Activated CD4-positive, alpha-beta memory T cell treated with anti-CD3 and anti-CD28 coated beads for 36 hours (primary cell): ENCODE measurements at regions of chr13 and their contacts with region 1.

Region 1: GRCh38 chr13:75694722-75695121 is 58.6 kb downstream of the LMO7 start:
- DNase-seq: no peak
- H3K4me3 Mint-ChIP-seq: no peak overlapping the region
- H3K27ac Mint-ChIP-seq: no peak overlapping the region
- H3K4me1 Mint-ChIP-seq: no peaks in the 10 kb centered on the region
- H3K27me3 Mint-ChIP-seq: no peaks in the 10 kb centered on the region

Region 2: DNA sequence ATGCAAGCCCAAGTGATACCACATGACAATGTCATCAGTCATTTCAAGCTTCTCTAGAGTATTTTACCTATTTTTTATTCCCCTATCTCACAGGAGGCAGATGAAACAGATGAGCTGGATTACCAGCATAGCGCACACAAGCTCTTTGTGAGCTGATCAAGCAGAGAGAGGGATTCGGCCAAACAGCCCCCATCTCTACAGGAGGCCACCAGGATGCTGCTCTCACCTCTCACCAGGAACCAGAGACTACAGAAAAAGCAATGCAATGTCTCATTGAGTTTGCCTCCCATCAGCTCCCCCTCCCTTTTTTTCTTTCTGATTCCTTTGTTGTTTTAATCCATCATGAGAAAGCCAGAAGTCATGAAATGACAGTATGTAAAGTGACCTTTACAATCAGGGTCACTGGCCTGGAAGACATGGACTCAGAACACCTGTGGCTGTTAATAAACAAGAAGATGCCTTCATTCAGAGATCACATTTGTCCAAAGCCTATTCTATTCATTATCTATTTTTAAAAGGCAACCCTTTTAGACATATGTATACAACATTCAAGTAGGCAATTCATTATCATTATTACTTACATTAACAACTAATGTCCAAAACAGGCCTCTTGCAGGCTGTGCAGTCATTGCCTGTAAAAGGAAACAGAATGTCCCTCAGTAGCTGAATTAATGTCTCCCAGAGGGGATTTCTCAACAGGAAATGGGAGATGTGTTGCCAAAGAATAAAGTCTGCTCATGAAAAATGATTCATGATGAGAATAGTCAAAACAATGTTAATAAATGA is 869.4 kb before region 1 on chr13:
- CTCF ChIA-PET with region 1: no interaction called
- POLR2A ChIA-PET with region 1: no interaction called
- intact Hi-C with region 1: no loop called
- DNase-seq: no peak
- H3K4me3 Mint-ChIP-seq: no peak overlapping the region
- H3K27ac Mint-ChIP-seq: no peak overlapping the region
- H3K4me1 Mint-ChIP-seq: no peaks in the 10 kb centered on the region
- H3K27me3 Mint-ChIP-seq: no peaks in the 10 kb centered on the region

Region 3: DNA sequence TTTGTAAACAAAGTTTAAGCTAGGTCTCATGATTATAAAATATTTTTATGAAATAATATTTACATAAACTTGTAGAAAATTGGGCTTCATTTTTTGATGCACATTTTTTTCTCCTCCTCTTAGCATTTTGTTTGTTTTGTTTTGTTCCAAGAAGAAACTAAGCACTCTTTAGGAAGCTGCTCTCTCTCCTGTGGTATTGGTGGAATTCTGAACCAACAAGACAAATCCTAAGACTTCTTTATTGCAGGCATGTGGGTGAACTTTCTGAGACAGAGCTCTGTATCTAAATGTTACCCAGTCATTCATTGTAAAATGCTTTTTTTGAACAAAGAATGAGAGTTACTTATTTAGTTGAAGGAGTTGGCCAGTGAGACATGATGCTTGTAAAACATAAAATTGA is 19.3 kb before region 1 on chr13:
- CTCF ChIA-PET with region 1: interaction called, 36 read pairs
- POLR2A ChIA-PET with region 1: no interaction called
- intact Hi-C with region 1: no loop called
- DNase-seq: no peak
- H3K4me3 Mint-ChIP-seq: no peak overlapping the region
- H3K27ac Mint-ChIP-seq: no peak overlapping the region
- H3K4me1 Mint-ChIP-seq: no peaks in the 10 kb centered on the region
- H3K27me3 Mint-ChIP-seq: no peaks in the 10 kb centered on the region

Region 4: GRCh38 chr13:75715601-75716523 is 21.1 kb after region 1 on chr13:
- CTCF ChIA-PET with region 1: interaction called, 15 read pairs
- POLR2A ChIA-PET with region 1: no interaction called
- intact Hi-C with region 1: no loop called
- DNase-seq: peak; percentile 16
- H3K4me3 Mint-ChIP-seq: no peak overlapping the region
- H3K27ac Mint-ChIP-seq: no peak overlapping the region
- H3K4me1 Mint-ChIP-seq: peaks cover 6% of the 10 kb centered on the region
- H3K27me3 Mint-ChIP-seq: no peaks in the 10 kb centered on the region

Region 5: GRCh38 chr13:75792526-75793187 is 97.9 kb after region 1 on chr13:
- CTCF ChIA-PET with region 1: interaction called, 17 read pairs
- POLR2A ChIA-PET with region 1: no interaction called
- intact Hi-C with region 1: no loop called
- DNase-seq: no peak
- H3K4me3 Mint-ChIP-seq: no peak overlapping the region
- H3K27ac Mint-ChIP-seq: no peak overlapping the region
- H3K4me1 Mint-ChIP-seq: peaks cover 8% of the 10 kb centered on the region
- H3K27me3 Mint-ChIP-seq: no peaks in the 10 kb centered on the region

Region 6: DNA sequence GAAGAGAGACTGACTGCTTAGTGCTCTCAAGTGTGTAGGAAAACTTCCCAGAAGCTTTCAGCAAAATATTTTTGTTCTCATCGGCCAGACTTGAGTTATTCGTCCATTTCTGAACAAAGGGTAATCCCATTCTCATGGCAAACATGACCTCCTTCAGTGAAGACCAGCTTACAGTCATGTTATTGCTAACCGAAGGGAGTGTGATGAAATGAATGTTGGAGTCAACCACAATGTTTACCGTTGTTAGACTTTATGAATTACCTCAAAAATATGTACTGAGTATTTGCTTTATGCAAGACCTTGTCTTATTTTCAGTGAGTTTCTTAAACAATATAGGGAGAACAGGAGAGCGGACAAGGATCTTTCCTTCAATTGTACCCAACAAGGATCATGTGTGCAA is 170.0 kb after region 1 on chr13:
- CTCF ChIA-PET with region 1: interaction called, 83 read pairs
- POLR2A ChIA-PET with region 1: no interaction called
- intact Hi-C with region 1: no loop called
- DNase-seq: no peak
- H3K4me3 Mint-ChIP-seq: no peak overlapping the region
- H3K27ac Mint-ChIP-seq: no peak overlapping the region
- H3K4me1 Mint-ChIP-seq: peaks cover 2% of the 10 kb centered on the region
- H3K27me3 Mint-ChIP-seq: no peaks in the 10 kb centered on the region

Region 7: DNA sequence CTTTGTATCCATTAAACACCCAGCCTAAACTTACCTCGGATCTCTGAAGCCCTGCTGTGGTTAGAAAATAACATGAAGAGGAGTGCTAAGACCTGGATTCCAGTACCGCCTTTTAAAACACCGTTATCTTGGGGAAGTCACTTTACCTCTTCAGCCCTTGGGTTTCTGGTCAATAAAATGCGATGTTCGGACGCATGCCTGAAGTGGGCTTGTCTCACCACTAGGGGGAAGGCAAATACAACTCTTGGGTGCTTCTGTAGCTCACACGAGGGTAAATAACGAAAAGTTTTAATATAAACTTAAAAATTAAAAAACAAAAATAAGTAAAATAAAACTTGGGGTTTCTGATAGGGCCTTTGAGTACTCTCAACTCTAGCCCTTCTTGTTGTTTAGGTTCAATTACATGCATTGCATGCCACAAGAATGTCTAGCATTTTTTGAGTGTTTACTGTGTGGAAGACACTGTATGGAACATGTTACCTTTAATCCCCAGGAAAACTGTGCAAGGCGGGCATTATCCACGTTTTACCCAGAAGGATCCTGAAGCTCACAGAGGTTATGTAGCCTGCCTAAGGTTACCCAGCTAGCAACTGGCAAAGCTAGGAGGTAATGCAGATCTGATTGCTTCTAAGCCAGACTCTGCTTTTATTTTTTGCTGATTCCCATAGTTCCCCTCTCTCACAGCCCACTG is 181.8 kb after region 1 on chr13:
- CTCF ChIA-PET with region 1: interaction called, 83 read pairs
- POLR2A ChIA-PET with region 1: no interaction called
- intact Hi-C with region 1: loop called (anchors 2 kb)
- DNase-seq: peak; percentile 66
- H3K4me3 Mint-ChIP-seq: no peak overlapping the region
- H3K27ac Mint-ChIP-seq: no peak overlapping the region
- H3K4me1 Mint-ChIP-seq: peaks cover 10% of the 10 kb centered on the region
- H3K27me3 Mint-ChIP-seq: no peaks in the 10 kb centered on the region

Region 8: DNA sequence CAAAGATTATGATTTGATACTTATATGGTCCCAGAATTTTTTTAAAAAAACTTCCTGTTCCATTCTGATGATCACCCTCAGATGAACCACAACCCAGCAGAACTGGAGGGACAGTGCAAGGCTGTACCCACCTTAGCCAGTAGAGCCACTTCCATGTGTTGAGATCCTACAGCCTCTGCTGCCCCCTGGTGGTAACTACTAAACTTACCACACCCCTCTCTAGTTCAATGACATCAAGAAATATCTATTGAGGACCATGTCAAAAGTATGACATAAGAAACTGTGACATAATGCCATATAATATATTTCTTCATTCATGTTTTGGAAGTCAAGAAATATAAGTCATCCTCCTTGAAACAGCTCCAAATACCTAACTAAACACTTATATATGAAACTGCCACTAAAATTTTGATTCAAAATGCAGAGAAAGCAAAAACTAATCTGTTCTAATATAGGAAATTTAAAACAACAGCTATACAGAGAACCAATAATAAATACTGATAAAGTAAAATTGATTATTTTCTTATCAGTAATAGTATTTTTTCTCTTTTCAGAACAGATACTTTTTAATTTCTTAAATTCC is 778.9 kb after region 1 on chr13:
- CTCF ChIA-PET with region 1: interaction called, 27 read pairs
- POLR2A ChIA-PET with region 1: no interaction called
- intact Hi-C with region 1: loop called (anchors 2 kb)
- DNase-seq: peak; percentile 76
- H3K4me3 Mint-ChIP-seq: no peak overlapping the region
- H3K27ac Mint-ChIP-seq: no peak overlapping the region
- H3K4me1 Mint-ChIP-seq: no peaks in the 10 kb centered on the region
- H3K27me3 Mint-ChIP-seq: peaks cover 11% of the 10 kb centered on the region